OCI-LY7 (cell line): ENCODE measurements at regions of chr1 and their contacts with region 1.

Region 1: GRCh38 chr1:151198255-151199127 is at the start of gene PIP5K1A:
- DNase-seq: peak; percentile 99
- H3K4me3 ChIP-seq: peak within 1 kb of the TSS; percentile 98
- H3K27ac ChIP-seq: peak within 1 kb of the TSS; percentile 66
- H3K4me1 ChIP-seq: peaks cover 35% of the 10 kb centered on the region
- CTCF ChIP-seq: no peak
- total RNA-seq, gene PIP5K1A: 42.9 and 50.5 TPM in 2 replicates

Region 2: GRCh38 chr1:151254217-151255213 is 56.0 kb after region 1 on chr1 and contains the start of gene PSMD4:
- CTCF ChIA-PET with region 1: interaction called, 3 read pairs
- POLR2A ChIA-PET with region 1: interaction called, 6 read pairs
- intact Hi-C with region 1: loop called (anchors 1 kb)
- DNase-seq: peak; percentile 97
- H3K4me3 ChIP-seq: peak within 1 kb of the TSS; percentile 90
- H3K27ac ChIP-seq: peak within 1 kb of the TSS; percentile 45
- H3K4me1 ChIP-seq: peaks cover 4% of the 10 kb centered on the region
- CTCF ChIP-seq: no peak
- total RNA-seq, gene PSMD4: 118 and 134 TPM in 2 replicates